ENCODE measurements at regions of chr10 and their contacts with region 1.

Region 1: DNA sequence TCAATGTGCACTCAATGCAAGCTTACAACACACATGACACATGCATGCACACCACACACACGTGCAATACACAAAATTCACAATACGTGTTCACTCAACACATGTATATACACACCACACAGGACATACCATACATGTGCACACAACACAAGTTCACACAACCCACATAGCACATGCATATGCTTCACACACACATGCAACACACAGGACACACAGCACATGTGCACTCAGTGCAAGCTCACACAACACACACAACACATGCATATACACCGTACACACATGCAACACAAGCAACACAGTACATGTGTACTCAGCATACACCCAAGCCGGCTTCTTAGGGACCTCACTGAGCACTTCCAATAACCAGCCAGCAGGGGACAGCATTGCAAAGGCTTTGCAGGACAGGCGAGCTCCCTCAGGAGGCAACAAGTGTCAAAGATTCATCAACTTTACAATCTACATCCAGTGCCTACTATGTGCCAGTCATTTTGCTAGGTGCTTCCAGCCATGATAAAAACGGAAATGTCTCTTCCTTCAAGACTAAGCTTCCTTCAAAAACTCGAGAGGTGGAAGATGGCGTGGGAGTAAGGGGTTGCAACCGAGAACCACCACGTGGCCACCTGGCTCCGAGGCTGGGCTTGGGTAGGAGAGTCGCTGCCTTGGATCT is 61.1 kb downstream of the JCAD start:
- DNase-seq: peak; percentile 62 to 87 (median 68)
- ATAC-seq: peak; percentile 92
- H3K4me3 ChIP-seq: no peak overlapping the region
- H3K4me3 Mint-ChIP-seq: no peak overlapping the region
- H3K27ac ChIP-seq: no peak overlapping the region
- H3K27ac Mint-ChIP-seq: no peak overlapping the region
- H3K4me1 ChIP-seq: peaks cover 6% of the 10 kb centered on the region
- H3K4me1 Mint-ChIP-seq: peaks cover 8% of the 10 kb centered on the region
- H3K27me3 ChIP-seq: peaks cover 17 to 25% of the 10 kb centered on the region in 2 experiments
- H3K27me3 Mint-ChIP-seq: peaks cover 79% of the 10 kb centered on the region
- CTCF ChIP-seq: peak; percentile 92

Region 2: DNA sequence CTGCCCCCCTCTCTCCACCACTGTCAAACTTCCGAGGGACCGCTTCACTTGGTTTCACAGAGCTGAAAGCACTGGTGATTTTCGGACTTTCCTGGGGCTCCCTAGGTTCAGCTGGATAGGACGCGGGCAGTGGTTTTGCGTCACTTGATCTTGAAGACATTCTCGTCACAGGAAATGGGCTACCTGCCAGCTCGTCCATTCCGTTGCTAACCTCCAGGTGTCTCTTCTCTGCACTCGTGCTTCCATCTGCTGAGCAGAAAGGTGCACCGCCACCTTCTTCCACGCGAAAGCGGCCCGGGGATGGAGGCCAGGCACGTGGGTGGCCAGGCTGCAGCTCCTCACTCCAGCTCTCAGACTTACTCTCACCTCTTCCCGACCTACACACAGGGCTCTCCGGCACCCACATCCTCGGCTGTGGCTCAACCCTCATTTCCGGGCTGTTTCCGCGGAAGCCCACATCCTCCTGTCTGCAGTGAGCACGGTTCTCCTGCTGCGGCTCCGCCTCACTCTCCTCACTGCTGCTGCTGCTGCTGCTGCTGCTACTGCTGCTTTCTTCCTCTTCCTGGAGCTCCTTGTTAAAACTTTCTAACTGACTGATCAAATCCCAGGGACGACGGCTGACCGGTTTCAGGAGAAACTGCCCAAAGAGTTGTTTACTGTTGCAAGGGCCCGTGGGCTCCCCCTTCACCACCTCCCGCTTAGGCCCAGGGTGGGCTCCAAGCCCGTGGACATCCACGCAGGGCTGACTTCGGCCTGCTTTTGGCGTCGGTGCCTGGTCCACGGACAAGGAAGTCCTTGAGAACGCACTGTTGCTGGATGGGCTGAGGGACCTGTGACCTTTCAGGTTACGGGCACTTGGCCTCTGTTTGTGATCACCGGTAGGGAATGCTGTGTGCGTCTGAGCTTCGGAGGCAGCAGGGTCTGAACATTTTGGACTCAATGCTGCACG is 29.1 kb after region 1 on chr10:
- CTCF ChIA-PET with region 1: interaction called, 3 read pairs
- POLR2A ChIA-PET with region 1: interaction called, 6 read pairs
- intact Hi-C with region 1: loop called in 1 of 2 experiments (anchors 2 kb)
- DNase-seq: peak; percentile 72 to 96 (median 83)
- ATAC-seq: peak; percentile 93
- H3K4me3 ChIP-seq: peak overlapping the region; percentile 35
- H3K4me3 Mint-ChIP-seq: peak overlapping the region; percentile 74
- H3K27ac ChIP-seq: no peak overlapping the region
- H3K27ac Mint-ChIP-seq: peak overlapping the region; percentile 79
- H3K4me1 ChIP-seq: peaks cover 40% of the 10 kb centered on the region
- H3K4me1 Mint-ChIP-seq: peaks cover 36% of the 10 kb centered on the region
- H3K27me3 ChIP-seq: peaks cover 32 to 35% of the 10 kb centered on the region in 2 experiments
- H3K27me3 Mint-ChIP-seq: peaks cover 85% of the 10 kb centered on the region
- CTCF ChIP-seq: peak; percentile 25

Region 3: DNA sequence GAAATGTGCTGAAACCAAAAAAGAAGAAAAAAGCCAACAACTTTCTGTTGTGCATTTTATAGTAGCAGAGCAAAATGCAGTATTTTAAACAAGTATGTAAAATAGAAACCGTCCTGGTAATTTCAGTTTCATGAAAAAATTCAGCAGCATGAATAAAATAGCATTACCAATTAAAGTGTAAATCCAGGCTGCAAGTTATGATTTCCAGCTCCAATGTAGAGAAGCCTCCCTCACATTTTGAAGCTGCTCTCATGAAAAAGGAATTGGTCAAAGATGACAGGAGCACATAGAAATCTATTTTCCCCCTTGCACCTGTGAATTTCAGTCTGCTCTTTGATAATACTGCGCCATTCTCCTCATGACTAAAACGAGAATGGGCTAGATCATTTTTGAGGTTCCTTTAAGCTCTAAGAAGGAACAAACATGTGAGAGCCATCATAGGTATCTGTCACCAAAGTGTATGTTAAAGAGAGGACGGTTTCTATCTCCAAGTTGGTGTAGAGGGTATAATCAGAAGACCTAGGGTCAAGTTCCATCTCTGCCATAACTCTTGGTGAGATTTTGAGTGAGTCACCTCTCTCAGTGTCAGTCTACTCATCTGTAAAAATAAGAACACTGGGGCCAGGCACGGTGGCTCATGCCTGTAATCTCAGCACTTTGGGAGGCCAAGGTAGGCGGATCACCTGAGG is 243.3 kb after region 1 on chr10:
- CTCF ChIA-PET with region 1: interaction called, 9 read pairs
- POLR2A ChIA-PET with region 1: no interaction called
- intact Hi-C with region 1: loop called (anchors 1 to 5 kb)
- DNase-seq: no peak
- ATAC-seq: no peak
- H3K4me3 ChIP-seq: no peak overlapping the region
- H3K4me3 Mint-ChIP-seq: no peak overlapping the region
- H3K27ac ChIP-seq: no peak overlapping the region
- H3K27ac Mint-ChIP-seq: no peak overlapping the region
- H3K4me1 ChIP-seq: no peaks in the 10 kb centered on the region
- H3K4me1 Mint-ChIP-seq: no peaks in the 10 kb centered on the region
- H3K27me3 ChIP-seq: no peaks in the 10 kb centered on the region
- H3K27me3 Mint-ChIP-seq: peaks cover 23% of the 10 kb centered on the region
- CTCF ChIP-seq: no peak

Region 4: GRCh38 chr10:30384701-30385201 is 386.5 kb after region 1 on chr10:
- CTCF ChIA-PET with region 1: interaction called, 4 read pairs
- POLR2A ChIA-PET with region 1: no interaction called
- intact Hi-C with region 1: loop called in 1 of 2 experiments (anchors 1 kb)
- DNase-seq: peak in 3 of 14 experiments; percentile 14 to 31 (median 24)
- ATAC-seq: no peak
- H3K4me3 ChIP-seq: no peak overlapping the region
- H3K4me3 Mint-ChIP-seq: no peak overlapping the region
- H3K27ac ChIP-seq: no peak overlapping the region
- H3K27ac Mint-ChIP-seq: no peak overlapping the region
- H3K4me1 ChIP-seq: no peaks in the 10 kb centered on the region
- H3K4me1 Mint-ChIP-seq: no peaks in the 10 kb centered on the region
- H3K27me3 ChIP-seq: no peaks in the 10 kb centered on the region
- H3K27me3 Mint-ChIP-seq: peaks cover 18% of the 10 kb centered on the region
- CTCF ChIP-seq: no peak

Region 5: GRCh38 chr10:30591249-30591670 is 593.0 kb after region 1 on chr10:
- CTCF ChIA-PET with region 1: interaction called, 6 read pairs
- POLR2A ChIA-PET with region 1: interaction called, 4 read pairs
- intact Hi-C with region 1: loop called (anchors 1 to 2 kb)
- DNase-seq: peak in 13 of 14 experiments; percentile 8 to 82 (median 20)
- ATAC-seq: peak; percentile 74
- H3K4me3 ChIP-seq: no peak overlapping the region
- H3K4me3 Mint-ChIP-seq: no peak overlapping the region
- H3K27ac ChIP-seq: no peak overlapping the region
- H3K27ac Mint-ChIP-seq: no peak overlapping the region
- H3K4me1 ChIP-seq: peaks cover 3% of the 10 kb centered on the region
- H3K4me1 Mint-ChIP-seq: no peaks in the 10 kb centered on the region
- H3K27me3 ChIP-seq: no peaks in the 10 kb centered on the region
- H3K27me3 Mint-ChIP-seq: no peaks in the 10 kb centered on the region
- CTCF ChIP-seq: peak; percentile 90